ENCODE measurements at regions of chr11 and their contacts with region 1.

Region 1: DNA sequence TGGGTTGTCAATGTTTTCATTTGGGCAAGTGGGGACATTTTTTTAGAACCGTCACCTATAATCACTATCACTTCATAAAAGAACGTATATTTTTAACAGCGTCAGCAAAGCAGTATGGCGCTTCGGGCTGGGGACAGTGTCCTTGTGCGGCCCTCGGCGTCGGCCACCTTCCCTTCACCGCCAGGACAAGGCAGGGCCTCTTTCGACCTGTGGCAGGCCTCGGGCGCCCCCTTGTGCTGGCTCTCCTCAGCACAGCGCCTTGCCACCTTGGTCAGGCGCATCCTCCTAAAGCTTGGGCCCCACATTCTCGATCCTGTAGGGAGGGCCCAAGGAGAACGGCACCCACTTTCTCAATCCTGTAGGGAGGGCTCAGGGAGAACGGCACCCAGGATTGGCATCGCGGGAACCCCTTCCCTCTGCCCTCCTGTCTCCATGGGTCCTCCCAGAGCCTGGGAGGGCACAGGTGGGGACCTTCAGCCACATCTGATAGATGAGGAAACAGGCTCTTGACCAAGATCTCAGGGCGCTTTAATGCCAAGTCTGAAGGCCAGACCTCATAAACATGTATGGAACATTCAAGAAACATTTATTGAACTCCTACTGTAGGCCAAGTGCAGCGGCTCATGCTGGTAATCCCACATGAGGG is 11.5 kb upstream of the FADD start:
- DNase-seq: peak; percentile 86 to 94
- ATAC-seq: peak; percentile 88
- H3K4me3 ChIP-seq: no peak overlapping the region
- H3K27ac ChIP-seq: no peak overlapping the region
- H3K4me1 ChIP-seq: no peaks in the 10 kb centered on the region
- H3K27me3 ChIP-seq: no peaks in the 10 kb centered on the region

Region 2: DNA sequence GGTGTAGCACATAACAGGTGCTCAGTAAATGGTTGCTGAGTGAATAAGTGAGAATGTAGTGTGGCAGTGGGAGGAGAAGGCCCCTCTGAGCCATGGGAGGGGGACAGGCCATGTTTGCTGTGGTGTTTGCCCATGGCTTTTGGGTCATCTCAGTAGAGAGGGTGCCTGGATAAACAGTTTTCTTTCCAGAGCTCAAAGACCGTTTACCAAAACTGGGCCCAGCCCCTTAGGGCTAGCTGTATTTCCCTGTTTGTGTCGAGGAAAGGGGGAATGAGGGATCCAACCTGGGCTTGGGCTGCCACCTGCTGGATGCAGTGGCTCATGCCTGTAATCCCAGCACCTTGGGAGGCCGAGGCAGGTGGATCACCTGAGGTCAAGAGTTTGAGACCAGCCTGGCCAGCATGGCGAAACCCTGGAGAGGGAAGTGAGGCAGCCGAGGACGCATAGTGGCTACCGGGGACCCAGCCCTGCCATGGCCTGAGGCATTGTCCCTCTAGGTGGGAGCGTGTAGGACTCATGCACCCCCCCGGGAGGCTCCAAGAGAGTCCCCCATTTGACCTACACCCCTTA is 507.8 kb before region 1 on chr11:
- intact Hi-C with region 1: loop called (anchors 2 kb)
- DNase-seq: peak in 1 of 2 donors; percentile 72
- ATAC-seq: peak; percentile 39
- H3K4me3 ChIP-seq: no peak overlapping the region
- H3K27ac ChIP-seq: no peak overlapping the region
- H3K4me1 ChIP-seq: no peaks in the 10 kb centered on the region
- H3K27me3 ChIP-seq: no peaks in the 10 kb centered on the region

Region 3: GRCh38 chr11:69909561-69910496 is 281.8 kb before region 1 on chr11:
- intact Hi-C with region 1: loop called (anchors 2 kb)
- DNase-seq: peak; percentile 46 to 75
- ATAC-seq: no peak
- H3K4me3 ChIP-seq: no peak overlapping the region
- H3K27ac ChIP-seq: no peak overlapping the region
- H3K4me1 ChIP-seq: no peaks in the 10 kb centered on the region
- H3K27me3 ChIP-seq: no peaks in the 10 kb centered on the region

Region 4: GRCh38 chr11:70111269-70112016 is 80.2 kb before region 1 on chr11:
- intact Hi-C with region 1: no loop called
- DNase-seq: peak in 1 of 2 donors; percentile 68
- ATAC-seq: peak; percentile 14
- H3K4me3 ChIP-seq: no peak overlapping the region
- H3K27ac ChIP-seq: no peak overlapping the region
- H3K4me1 ChIP-seq: peaks cover 0 to 1% of the 10 kb centered on the region in 2 donors
- H3K27me3 ChIP-seq: no peaks in the 10 kb centered on the region

Measured in aorta (tissue), 5 donors.